Common myeloid progenitor, CD34-positive (primary cell): ENCODE measurements at regions of chr12 and their contacts with region 1.

Region 1: DNA sequence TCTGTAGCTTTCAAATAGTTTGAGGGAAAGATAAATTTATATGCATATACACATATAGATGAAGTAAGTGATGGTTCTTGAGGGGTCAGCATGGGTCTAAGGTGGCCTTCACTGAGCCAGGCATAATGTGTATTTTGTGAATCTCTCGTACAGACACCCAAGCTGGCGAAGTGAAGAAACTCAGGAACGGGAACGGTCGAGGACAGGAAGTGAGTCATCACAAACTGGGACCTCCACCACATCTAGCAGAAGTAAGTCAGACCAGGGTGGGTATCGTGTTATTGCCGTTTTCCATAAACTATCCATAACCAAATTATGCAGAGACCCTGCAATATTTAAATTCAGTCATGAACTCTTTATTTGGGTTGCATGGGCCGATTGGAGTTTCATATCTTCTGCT is 15.4 kb upstream of the TNS2 start:
- DNase-seq: no peak
- H3K4me3 ChIP-seq: no peak overlapping the region
- H3K27ac ChIP-seq: peak overlapping the region in 1 of 2 experiments; percentile 65
- H3K4me1 ChIP-seq: peaks cover 0 to 12% (median 4%) of the 10 kb centered on the region in 4 experiments
- H3K27me3 ChIP-seq: no peaks in the 10 kb centered on the region

Region 2: DNA sequence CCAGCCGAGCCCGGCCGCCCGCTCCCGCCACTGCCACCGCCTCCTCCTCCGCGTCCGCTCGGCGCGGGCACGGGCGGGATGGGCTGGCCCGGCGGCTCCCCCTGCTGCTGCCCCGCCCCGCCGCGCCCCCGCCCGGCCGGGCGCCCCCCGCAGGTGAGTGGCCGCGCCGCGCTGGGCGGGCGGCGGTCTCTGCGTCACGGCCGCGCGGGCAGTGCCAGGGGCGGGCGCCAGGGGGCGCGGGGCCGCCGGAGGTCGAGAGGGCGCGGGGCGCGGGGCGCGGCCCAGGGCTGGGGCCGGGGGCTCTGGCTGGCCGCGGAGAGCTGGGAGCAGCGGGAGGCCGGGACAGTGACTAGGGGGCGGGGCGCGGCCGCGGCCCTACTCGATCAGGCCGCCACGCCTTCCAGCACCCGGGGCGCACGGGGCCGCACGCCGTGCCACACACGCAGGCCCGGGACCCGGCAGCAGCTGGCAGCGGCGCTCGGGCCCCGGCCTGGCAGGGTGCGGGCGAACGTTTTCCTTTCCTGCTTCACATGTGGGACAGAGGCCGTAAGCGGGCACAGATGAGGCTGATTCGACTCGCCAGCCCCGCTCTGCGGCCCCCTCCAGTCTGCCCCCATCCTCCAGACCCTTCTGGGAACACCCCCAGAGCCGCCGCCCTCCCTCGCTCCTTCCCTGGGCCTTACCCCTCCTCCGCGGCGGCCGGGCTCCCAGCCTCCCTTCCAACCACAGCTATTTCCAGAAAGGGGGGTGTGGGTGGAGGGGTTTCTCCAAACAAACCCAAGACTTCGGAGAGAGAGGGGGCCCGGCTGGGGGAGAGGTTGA is 13.0 kb after region 1 on chr12:
- CTCF ChIA-PET with region 1: interaction called, 33 read pairs
- POLR2A ChIA-PET with region 1: interaction called, 3 read pairs
- DNase-seq: peak; percentile 46 to 76 (median 69)
- H3K4me3 ChIP-seq: peak overlapping the region; percentile 48 to 89 (median 79)
- H3K27ac ChIP-seq: peak overlapping the region in 1 of 2 experiments; percentile 34
- H3K4me1 ChIP-seq: peaks cover 0 to 29% (median 20%) of the 10 kb centered on the region in 4 experiments
- H3K27me3 ChIP-seq: peaks cover 0 to 1% (median 0%) of the 10 kb centered on the region in 5 experiments

Region 3: DNA sequence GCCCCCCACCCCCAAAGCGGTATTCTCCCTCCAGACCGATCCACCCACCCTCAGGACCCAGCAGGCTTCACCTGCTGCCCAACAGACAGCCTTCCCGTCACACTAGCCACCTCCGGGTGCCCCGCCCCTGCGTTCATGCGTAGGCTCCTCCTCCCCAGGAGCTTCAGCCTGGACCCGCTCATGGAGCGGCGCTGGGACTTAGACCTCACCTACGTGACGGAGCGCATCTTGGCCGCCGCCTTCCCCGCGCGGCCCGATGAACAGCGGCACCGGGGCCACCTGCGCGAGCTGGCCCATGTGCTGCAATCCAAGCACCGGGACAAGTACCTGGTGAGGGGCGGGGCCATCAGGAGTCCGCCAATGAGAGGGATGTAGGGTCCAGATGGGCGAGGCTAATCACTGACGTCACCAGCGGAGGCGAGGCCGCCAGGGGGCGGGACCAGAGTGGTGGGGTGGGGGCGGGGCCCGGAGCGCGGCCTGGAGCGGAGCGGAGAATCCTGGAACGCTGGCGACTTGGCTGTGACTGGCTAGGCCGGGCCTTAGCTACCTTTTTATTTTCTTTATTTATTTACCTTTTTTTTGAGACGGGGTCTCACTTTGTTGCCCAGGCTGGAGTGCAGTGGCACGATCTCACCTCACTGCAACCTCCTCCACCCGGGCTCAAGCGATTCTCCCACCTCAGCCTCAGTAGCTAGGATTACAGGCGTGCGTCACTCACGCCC is 19.8 kb after region 1 on chr12:
- CTCF ChIA-PET with region 1: interaction called, 33 read pairs
- POLR2A ChIA-PET with region 1: interaction called, 3 read pairs
- DNase-seq: peak; percentile 91 to 95 (median 94)
- H3K4me3 ChIP-seq: peak overlapping the region; percentile 72 to 93 (median 79)
- H3K27ac ChIP-seq: peak overlapping the region in 1 of 2 experiments; percentile 25
- H3K4me1 ChIP-seq: peaks cover 0 to 18% (median 10%) of the 10 kb centered on the region in 4 experiments
- H3K27me3 ChIP-seq: no peaks in the 10 kb centered on the region

Region 4: GRCh38 chr12:53074283-53074998 is 40.0 kb after region 1 on chr12:
- CTCF ChIA-PET with region 1: no interaction called
- POLR2A ChIA-PET with region 1: no interaction called
- DNase-seq: no peak
- H3K4me3 ChIP-seq: no peak overlapping the region
- H3K27ac ChIP-seq: no peak overlapping the region
- H3K4me1 ChIP-seq: peaks cover 3 to 28% (median 17%) of the 10 kb centered on the region in 4 experiments
- H3K27me3 ChIP-seq: no peaks in the 10 kb centered on the region